ENCODE measurements at regions of chr1 and their contacts with region 1.

Region 1: GRCh38 chr1:15788624-15789301 is 18.7 kb downstream of the UQCRHL start:
- DNase-seq: peak; percentile 75
- ATAC-seq: peak; percentile 28
- H3K4me3 ChIP-seq: no peak overlapping the region
- H3K27ac ChIP-seq: no peak overlapping the region
- H3K4me1 ChIP-seq: peaks cover 6% of the 10 kb centered on the region; the same call in 1 of the 2 replicates
- H3K27me3 ChIP-seq: no peaks in the 10 kb centered on the region
- CTCF ChIP-seq: no peak
- POLR2A ChIP-seq: no peak
- RAD21 ChIP-seq: no peak

Region 2: DNA sequence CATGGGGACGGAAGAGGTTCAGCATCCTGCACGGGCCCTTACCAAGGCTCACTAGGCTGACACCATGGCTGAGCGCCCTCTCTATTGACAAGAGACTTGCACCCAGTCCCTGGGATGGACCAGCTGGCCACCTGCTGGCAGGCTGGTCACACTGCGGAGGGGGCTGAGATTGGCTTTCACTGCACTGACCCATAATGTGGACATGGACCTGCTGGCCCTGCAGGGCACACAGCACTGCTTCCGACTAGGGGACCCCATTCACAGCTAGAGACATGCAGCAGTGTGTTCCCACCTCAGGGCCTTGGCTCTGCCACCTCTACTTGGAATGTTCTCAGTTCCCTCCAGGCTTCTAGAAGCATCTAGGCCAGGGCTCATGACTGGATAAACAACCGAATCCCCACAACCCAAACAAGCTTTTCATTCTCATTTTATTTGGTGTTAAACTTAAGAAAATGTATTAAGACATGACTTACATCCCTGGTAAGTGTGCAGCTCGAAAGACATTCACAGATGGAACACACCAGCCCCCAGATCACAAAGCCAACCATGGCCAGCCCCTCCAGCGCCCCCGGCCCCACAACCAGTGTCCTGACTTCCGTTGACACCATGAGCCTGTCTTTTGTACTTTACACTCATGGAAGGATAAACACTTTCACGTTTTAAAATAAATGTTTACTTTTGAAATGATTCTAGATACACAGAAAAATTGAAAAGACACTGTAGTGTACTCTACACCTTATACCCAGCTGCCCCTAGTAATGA is 206.0 kb after region 1 on chr1:
- CTCF ChIA-PET with region 1: interaction called, 5 read pairs
- POLR2A ChIA-PET with region 1: no interaction called
- dilution Hi-C with region 1: no loop called
- in situ Hi-C with region 1: no loop called
- intact Hi-C with region 1: loop called (anchors 1 kb)
- DNase-seq: peak; percentile 56
- ATAC-seq: peak; percentile 99
- H3K4me3 ChIP-seq: no peak overlapping the region
- H3K27ac ChIP-seq: no peak overlapping the region
- H3K4me1 ChIP-seq: peaks cover 2% of the 10 kb centered on the region; the same call in 1 of the 2 replicates
- H3K27me3 ChIP-seq: peaks cover 13% of the 10 kb centered on the region; the same call in 1 of the 2 replicates
- CTCF ChIP-seq: peak; percentile 90
- POLR2A ChIP-seq: no peak
- RAD21 ChIP-seq: peak; percentile 91

Region 3: DNA sequence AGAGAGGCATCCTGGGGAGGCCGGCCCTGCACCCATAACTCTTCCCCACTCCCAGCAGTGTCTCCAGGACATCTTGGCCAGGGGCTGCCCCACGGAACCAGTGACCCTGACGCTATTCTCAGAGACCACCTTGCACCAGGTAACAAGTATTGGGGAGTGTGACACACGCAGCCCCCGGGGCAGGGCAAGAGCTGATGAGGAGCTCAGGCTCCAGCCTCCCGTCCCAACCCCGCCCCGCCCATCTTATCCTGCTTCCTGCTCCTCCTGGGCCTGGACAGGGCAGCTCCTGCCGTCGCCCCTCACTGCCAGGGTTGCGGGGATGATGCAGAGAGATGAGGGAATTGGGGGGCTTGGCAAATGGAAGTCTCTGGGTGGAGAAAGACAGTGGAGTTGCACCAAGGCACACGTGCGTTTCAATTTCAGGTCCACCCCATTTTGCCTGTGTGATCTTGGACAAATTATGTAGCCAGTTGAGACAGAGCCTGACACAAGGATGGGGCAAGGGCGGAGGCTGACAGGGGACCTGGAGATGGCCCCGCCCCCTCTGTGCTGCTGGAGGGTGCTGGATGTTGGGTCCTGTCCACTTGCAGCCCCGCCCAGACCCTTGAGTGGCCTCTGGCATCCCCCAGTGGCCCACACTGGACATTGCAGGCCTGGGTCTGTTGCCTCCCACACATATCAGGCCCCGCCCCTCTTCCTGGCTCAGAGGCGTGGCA is 243.8 kb after region 1 on chr1:
- CTCF ChIA-PET with region 1: interaction called, 3 read pairs
- POLR2A ChIA-PET with region 1: no interaction called
- dilution Hi-C with region 1: no loop called
- in situ Hi-C with region 1: no loop called
- intact Hi-C with region 1: loop called (anchors 2 kb)
- DNase-seq: peak; percentile 79
- ATAC-seq: peak; percentile 100
- H3K4me3 ChIP-seq: no peak overlapping the region
- H3K27ac ChIP-seq: no peak overlapping the region
- H3K4me1 ChIP-seq: no peaks in the 10 kb centered on the region
- H3K27me3 ChIP-seq: peaks cover 9% of the 10 kb centered on the region
- CTCF ChIP-seq: peak; percentile 98
- POLR2A ChIP-seq: 0 out of 2 replicates have a peak, but pooled peaks have one; percentile 26
- RAD21 ChIP-seq: peak; percentile 97

Region 4: GRCh38 chr1:16055613-16056520 is 267.1 kb after region 1 on chr1:
- CTCF ChIA-PET with region 1: no interaction called
- POLR2A ChIA-PET with region 1: no interaction called
- dilution Hi-C with region 1: no loop called
- in situ Hi-C with region 1: no loop called
- intact Hi-C with region 1: loop called (anchors 1 kb)
- DNase-seq: peak; percentile 64
- ATAC-seq: peak; percentile 99
- H3K4me3 ChIP-seq: no peak overlapping the region
- H3K27ac ChIP-seq: no peak overlapping the region
- H3K4me1 ChIP-seq: no peaks in the 10 kb centered on the region
- H3K27me3 ChIP-seq: peaks cover 22% of the 10 kb centered on the region
- CTCF ChIP-seq: peak; percentile 88
- POLR2A ChIP-seq: no peak
- RAD21 ChIP-seq: peak; percentile 89

Measured in IMR-90 (cell line).